Right ventricle myocardium inferior (tissue), 1 donor: ENCODE measurements at regions of chr11 and their contacts with region 1.

Region 1: GRCh38 chr11:62081378-62082291 is 42.2 kb upstream of the INCENP start:
- DNase-seq: peak; percentile 92
- ATAC-seq: peak; percentile 74

Region 2: DNA sequence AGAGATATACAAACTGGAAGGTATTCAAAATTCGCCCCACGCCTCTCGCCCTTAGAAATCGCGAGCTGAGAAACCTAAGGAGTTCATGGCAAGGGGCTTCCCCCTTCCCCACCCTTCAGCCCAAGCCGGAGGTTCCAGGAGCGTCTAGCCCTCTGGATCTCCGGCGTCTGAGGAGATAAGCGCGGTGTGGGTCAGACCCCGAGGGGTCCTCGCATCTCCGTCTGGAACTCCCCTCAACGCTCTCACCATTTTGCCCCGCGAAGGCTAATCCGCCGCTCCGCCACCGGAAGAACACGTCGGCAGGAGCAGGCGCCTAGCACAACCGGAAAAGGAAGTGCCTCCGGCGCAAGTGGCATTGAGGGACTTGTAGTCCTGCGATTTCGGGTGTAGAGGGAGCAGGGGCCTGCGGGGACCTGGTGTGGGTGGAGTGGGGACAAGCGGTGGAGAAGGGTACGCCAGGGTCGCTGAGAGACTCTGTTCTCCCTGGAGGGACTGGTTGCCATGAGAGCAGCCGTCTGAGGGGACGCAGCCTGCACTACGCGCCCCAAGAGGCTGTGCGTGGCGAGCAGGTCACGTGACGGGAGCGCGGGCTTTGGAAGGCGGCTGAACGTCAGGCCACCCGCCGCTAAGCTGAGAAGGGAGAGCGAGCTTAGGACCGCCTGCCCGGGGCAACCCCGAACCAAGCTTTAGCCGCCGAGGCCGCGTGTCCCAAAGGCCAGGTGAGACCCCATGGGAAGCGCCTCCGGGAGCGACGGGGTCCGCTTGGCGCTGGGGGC is 289.1 kb before region 1 on chr11 and contains the starts of genes FEN1 and TMEM258:
- intact Hi-C with region 1: loop called (anchors 1 kb)
- DNase-seq: peak; percentile 95
- ATAC-seq: peak; percentile 93
- total RNA-seq, gene FEN1: 7.0 TPM
- total RNA-seq, gene TMEM258: 130 TPM